Caco-2 (cell line): ENCODE measurements at regions of chr3 and their contacts with region 1.

Region 1: GRCh38 chr3:134350861-134351333 is 23.4 kb downstream of the AMOTL2 start:
- DNase-seq: peak; percentile 79 to 87
- H3K4me3 ChIP-seq: no peak overlapping the region
- H3K4me3 Mint-ChIP-seq: peak overlapping the region; percentile 38
- H3K27ac Mint-ChIP-seq: peak overlapping the region; percentile 65
- H3K4me1 ChIP-seq: peaks cover 83% of the 10 kb centered on the region
- H3K4me1 Mint-ChIP-seq: peaks cover 75% of the 10 kb centered on the region
- H3K27me3 ChIP-seq: no peaks in the 10 kb centered on the region
- H3K27me3 Mint-ChIP-seq: no peaks in the 10 kb centered on the region
- CTCF ChIP-seq: no peak

Region 2: DNA sequence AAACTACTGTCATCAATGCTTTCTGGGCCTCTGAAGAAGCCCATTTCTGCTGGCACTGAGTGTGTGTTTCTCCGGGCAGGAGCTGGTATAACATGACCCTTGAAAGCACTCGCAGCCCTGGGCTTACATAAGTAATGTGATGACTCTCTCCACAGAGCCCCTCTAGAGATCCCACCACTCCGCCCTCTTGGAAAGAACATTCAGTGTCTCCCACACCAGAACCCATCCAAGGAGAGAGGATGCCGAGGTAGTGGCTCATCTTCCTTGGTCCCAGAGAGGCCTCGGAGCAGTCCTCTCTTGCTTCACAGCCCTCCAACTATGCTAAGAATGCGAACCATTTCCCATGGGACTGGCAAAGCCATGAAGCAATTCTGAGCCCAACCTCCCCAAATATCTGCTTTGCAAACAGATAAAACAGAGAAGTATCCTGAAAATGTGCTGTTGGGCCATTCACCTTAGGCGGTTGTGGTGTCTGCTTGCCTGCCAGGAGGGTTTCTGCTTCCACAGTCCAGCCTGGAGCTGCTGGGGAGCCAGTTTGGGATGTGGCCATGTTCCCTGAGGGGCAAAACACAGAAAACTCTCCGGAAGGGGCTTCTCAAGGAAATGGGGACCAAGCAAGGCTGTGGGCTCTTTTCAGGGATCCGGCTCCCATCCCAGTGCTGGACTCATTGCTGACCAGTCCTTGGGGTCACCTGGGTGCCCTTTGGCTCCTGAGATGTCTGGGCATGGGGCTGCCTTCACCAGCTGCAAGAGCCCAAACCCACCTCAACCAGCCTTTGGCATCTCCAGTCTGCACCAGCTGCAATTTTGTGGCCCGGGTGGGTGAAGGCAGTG is 23.9 kb before region 1 on chr3:
- CTCF ChIA-PET with region 1: interaction called, 4 read pairs
- POLR2A ChIA-PET with region 1: interaction called, 10 read pairs
- intact Hi-C with region 1: loop called (anchors 1 kb)
- DNase-seq: peak; percentile 90 to 93
- H3K4me3 ChIP-seq: no peak overlapping the region
- H3K4me3 Mint-ChIP-seq: peak overlapping the region; percentile 59
- H3K27ac Mint-ChIP-seq: peak overlapping the region; percentile 95
- H3K4me1 ChIP-seq: peaks cover 75% of the 10 kb centered on the region
- H3K4me1 Mint-ChIP-seq: peaks cover 71% of the 10 kb centered on the region
- H3K27me3 ChIP-seq: no peaks in the 10 kb centered on the region
- H3K27me3 Mint-ChIP-seq: no peaks in the 10 kb centered on the region
- CTCF ChIP-seq: no peak

Region 3: GRCh38 chr3:134333522-134334181 is 17.2 kb before region 1 on chr3:
- CTCF ChIA-PET with region 1: interaction called, 6 read pairs
- POLR2A ChIA-PET with region 1: interaction called, 13 read pairs
- intact Hi-C with region 1: loop called (anchors 1 kb)
- DNase-seq: peak; percentile 88 to 93
- H3K4me3 ChIP-seq: no peak overlapping the region
- H3K4me3 Mint-ChIP-seq: peak overlapping the region; percentile 55
- H3K27ac Mint-ChIP-seq: peak overlapping the region; percentile 95
- H3K4me1 ChIP-seq: peaks cover 93% of the 10 kb centered on the region
- H3K4me1 Mint-ChIP-seq: peaks cover 81% of the 10 kb centered on the region
- H3K27me3 ChIP-seq: no peaks in the 10 kb centered on the region
- H3K27me3 Mint-ChIP-seq: no peaks in the 10 kb centered on the region
- CTCF ChIP-seq: peak; percentile 36 to 39

Region 4: GRCh38 chr3:134339331-134339730 is 11.6 kb before region 1 on chr3:
- CTCF ChIA-PET with region 1: interaction called, 6 read pairs
- POLR2A ChIA-PET with region 1: interaction called, 13 read pairs
- intact Hi-C with region 1: no loop called
- DNase-seq: peak; percentile 59 to 70
- H3K4me3 ChIP-seq: no peak overlapping the region
- H3K4me3 Mint-ChIP-seq: no peak overlapping the region
- H3K27ac Mint-ChIP-seq: peak overlapping the region; percentile 60
- H3K4me1 ChIP-seq: peaks cover 74% of the 10 kb centered on the region
- H3K4me1 Mint-ChIP-seq: peaks cover 58% of the 10 kb centered on the region
- H3K27me3 ChIP-seq: no peaks in the 10 kb centered on the region
- H3K27me3 Mint-ChIP-seq: no peaks in the 10 kb centered on the region
- CTCF ChIP-seq: peak; percentile 36 to 38

Region 5: GRCh38 chr3:134364061-134364935 is 13.4 kb after region 1 on chr3:
- CTCF ChIA-PET with region 1: interaction called, 8 read pairs
- POLR2A ChIA-PET with region 1: interaction called, 24 read pairs
- intact Hi-C with region 1: no loop called
- DNase-seq: peak; percentile 95 to 97
- H3K4me3 ChIP-seq: 0 out of 2 replicates have a peak overlapping the region, but pooled peaks have one; percentile 6
- H3K4me3 Mint-ChIP-seq: peak overlapping the region; percentile 70
- H3K27ac Mint-ChIP-seq: peak overlapping the region; percentile 82
- H3K4me1 ChIP-seq: peaks cover 95% of the 10 kb centered on the region
- H3K4me1 Mint-ChIP-seq: peaks cover 42% of the 10 kb centered on the region
- H3K27me3 ChIP-seq: no peaks in the 10 kb centered on the region
- H3K27me3 Mint-ChIP-seq: no peaks in the 10 kb centered on the region
- CTCF ChIP-seq: no peak

Region 6: DNA sequence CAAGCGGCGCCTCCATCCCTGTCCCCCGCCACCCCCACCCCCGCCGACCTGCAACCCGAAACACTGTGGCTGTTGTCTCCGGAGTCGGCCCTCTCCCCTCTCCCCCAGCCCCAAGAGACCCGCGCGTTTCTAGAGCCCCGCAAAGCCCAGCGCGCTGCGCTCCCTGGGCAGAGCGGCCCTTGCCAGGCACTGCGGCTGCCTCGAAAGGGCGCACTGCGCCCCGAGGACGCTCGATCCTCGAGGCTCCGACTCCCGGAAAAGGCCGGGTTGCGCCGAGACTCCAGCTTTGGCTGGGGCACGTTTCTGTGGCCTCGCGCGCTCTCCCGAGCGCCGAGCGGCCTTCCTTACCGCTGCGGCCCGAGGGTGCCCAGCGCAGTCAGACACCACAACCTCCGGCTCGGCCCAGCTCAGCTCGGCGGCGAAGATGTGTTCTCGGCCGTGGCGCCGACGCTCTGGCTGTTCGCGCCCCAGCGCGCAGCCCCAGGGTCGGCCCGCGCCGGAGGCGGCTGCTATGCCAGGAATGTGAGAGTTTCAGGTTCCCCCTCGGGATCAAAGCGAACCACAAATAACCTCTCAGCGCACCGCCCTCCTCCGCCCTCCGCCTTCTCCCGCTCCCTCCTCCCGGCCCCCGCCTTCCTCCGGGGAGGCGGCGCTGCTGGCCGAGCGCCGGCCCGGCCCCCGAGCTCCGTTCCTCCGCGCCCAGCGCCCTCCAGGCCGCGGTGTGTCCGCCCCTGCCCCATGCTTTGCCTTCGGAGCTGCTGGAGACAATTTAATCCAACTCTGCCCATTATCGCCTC is 23.3 kb after region 1 on chr3 and contains the start of gene AMOTL2:
- CTCF ChIA-PET with region 1: interaction called, 4 read pairs
- POLR2A ChIA-PET with region 1: interaction called, 3 read pairs
- intact Hi-C with region 1: loop called (anchors 2 kb)
- DNase-seq: peak; percentile 97
- H3K4me3 ChIP-seq: peak within 1 kb of the TSS; percentile 92
- H3K4me3 Mint-ChIP-seq: peak within 1 kb of the TSS; percentile 85
- H3K27ac Mint-ChIP-seq: peak within 1 kb of the TSS; percentile 77
- H3K4me1 ChIP-seq: peaks cover 61% of the 10 kb centered on the region
- H3K4me1 Mint-ChIP-seq: peaks cover 43% of the 10 kb centered on the region
- H3K27me3 ChIP-seq: no peaks in the 10 kb centered on the region
- H3K27me3 Mint-ChIP-seq: no peaks in the 10 kb centered on the region
- CTCF ChIP-seq: no peak
- total RNA-seq, gene AMOTL2: 220 and 271 TPM in 2 replicates

Region 7: GRCh38 chr3:134473868-134474546 is 123.1 kb after region 1 on chr3:
- CTCF ChIA-PET with region 1: interaction called, 5 read pairs
- POLR2A ChIA-PET with region 1: interaction called, 3 read pairs
- intact Hi-C with region 1: loop called (anchors 2 kb)
- DNase-seq: peak; percentile 77 to 84
- H3K4me3 ChIP-seq: no peak overlapping the region
- H3K4me3 Mint-ChIP-seq: no peak overlapping the region
- H3K27ac Mint-ChIP-seq: no peak overlapping the region
- H3K4me1 ChIP-seq: peaks cover 39% of the 10 kb centered on the region
- H3K4me1 Mint-ChIP-seq: peaks cover 10% of the 10 kb centered on the region
- H3K27me3 ChIP-seq: no peaks in the 10 kb centered on the region
- H3K27me3 Mint-ChIP-seq: no peaks in the 10 kb centered on the region
- CTCF ChIP-seq: peak; percentile 70 to 78